Caco-2 (cell line): ENCODE measurements at regions of chr16 and their contacts with region 1.

Region 1: GRCh38 chr16:50741808-50742575 is at the start of gene CYLD:
- DNase-seq: peak; percentile 100
- H3K4me3 ChIP-seq: peak within 1 kb of the TSS; percentile 76
- H3K4me3 Mint-ChIP-seq: peak within 1 kb of the TSS; percentile 78
- H3K27ac Mint-ChIP-seq: no peak within 1 kb of the TSS
- H3K4me1 ChIP-seq: no peaks in the 10 kb centered on the region; the same call in 1 of the 2 replicates
- H3K4me1 Mint-ChIP-seq: no peaks in the 10 kb centered on the region
- H3K27me3 ChIP-seq: peaks cover 1% of the 10 kb centered on the region; the same call in 1 of the 2 replicates
- H3K27me3 Mint-ChIP-seq: peaks cover 8% of the 10 kb centered on the region
- CTCF ChIP-seq: no peak
- total RNA-seq, gene CYLD: 9.8 and 13.1 TPM in 2 replicates

Region 2: DNA sequence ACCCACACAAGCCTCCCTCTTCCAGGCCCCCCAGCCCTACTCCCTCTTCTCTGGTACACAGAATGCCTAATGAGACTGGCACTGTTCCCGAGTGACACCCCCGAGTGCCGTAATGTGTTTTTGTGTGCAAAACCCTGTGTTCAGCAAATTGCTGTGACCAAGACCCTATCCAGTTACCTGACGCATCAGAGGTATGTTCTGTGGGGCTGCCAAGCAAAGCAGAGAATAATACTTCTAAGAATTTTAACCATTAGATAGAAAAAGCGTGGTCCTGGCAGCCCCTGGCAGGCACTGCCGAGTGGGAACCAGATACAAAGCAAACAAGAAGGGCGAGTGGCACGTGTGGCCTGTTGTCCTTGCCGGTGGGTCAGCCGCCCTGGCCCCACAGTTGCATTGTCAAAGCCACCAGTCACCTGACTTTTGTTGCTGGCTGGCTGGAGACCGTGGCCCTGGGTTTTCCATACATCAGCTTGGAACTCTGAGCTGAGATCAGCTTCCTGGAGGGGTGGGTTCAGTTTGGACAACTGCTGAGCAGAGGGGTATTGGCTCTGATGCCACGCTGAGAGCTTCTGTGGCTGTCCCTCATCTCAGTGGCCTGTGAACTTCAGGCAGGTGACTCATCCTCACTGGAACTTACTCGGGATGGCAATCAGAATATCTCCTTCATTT is 304.1 kb before region 1 on chr16:
- CTCF ChIA-PET with region 1: no interaction called
- POLR2A ChIA-PET with region 1: no interaction called
- intact Hi-C with region 1: no loop called
- DNase-seq: no peak
- H3K4me3 ChIP-seq: no peak overlapping the region
- H3K4me3 Mint-ChIP-seq: no peak overlapping the region
- H3K27ac Mint-ChIP-seq: no peak overlapping the region
- H3K4me1 ChIP-seq: no peaks in the 10 kb centered on the region
- H3K4me1 Mint-ChIP-seq: peaks cover 4% of the 10 kb centered on the region
- H3K27me3 ChIP-seq: no peaks in the 10 kb centered on the region
- H3K27me3 Mint-ChIP-seq: no peaks in the 10 kb centered on the region
- CTCF ChIP-seq: no peak

Region 3: DNA sequence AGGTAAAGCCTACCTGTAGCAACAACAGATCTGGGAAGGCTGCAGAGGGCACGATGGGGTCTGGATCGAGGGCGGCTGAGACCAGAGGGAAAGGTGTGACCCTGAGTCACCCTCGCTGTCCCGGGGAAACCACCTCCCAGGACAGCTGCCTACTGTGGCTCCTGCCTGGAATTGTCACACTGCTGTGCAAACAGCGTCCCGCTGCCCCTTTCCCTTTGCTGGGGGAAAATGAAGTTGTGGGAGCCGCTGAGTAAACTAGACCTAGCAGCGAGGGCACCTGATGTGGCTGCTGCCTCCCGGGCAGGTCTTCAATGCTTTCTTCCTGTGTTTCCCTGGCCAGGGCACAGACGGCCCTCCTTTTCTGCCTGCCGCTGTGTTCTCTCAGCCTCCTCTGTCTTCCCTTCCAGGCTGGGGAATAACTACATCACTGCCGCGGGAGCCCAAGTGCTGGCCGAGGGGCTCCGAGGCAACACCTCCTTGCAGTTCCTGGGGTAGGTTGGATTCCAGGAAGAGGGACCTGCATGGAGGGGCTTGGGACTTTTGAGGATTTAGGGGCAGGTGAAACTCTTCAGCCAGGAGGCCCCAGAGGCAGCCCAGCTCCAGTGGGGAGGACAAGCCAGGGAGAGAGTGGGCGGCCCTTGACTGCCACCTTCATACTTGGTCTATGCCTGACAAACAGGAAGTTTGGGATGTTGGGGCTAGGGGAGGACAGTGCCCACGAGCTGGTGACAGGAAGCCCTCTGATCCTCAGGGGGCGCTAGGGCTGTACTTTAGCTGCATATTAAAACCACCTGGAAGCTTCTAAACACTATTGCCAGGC is 22.3 kb before region 1 on chr16:
- CTCF ChIA-PET with region 1: interaction called, 4 read pairs
- POLR2A ChIA-PET with region 1: no interaction called
- intact Hi-C with region 1: loop called (anchors 1 kb)
- DNase-seq: peak; percentile 19 to 79
- H3K4me3 ChIP-seq: peak overlapping the region; percentile 16; the same call in 1 of the 2 replicates
- H3K4me3 Mint-ChIP-seq: peak overlapping the region; percentile 50
- H3K27ac Mint-ChIP-seq: peak overlapping the region; percentile 48
- H3K4me1 ChIP-seq: peaks cover 24% of the 10 kb centered on the region
- H3K4me1 Mint-ChIP-seq: peaks cover 20% of the 10 kb centered on the region
- H3K27me3 ChIP-seq: no peaks in the 10 kb centered on the region
- H3K27me3 Mint-ChIP-seq: no peaks in the 10 kb centered on the region
- CTCF ChIP-seq: peak in 1 of 2 experiments; percentile 1